Activated CD4-positive, alpha-beta T cell treated with anti-CD3 and anti-CD28 coated beads, Interleukin-2, amount 10 ng/mL, durations not matched to agents 24 days and 14 days (primary cell): ENCODE measurements at regions of chr6 and their contacts with region 1.

Region 1: DNA sequence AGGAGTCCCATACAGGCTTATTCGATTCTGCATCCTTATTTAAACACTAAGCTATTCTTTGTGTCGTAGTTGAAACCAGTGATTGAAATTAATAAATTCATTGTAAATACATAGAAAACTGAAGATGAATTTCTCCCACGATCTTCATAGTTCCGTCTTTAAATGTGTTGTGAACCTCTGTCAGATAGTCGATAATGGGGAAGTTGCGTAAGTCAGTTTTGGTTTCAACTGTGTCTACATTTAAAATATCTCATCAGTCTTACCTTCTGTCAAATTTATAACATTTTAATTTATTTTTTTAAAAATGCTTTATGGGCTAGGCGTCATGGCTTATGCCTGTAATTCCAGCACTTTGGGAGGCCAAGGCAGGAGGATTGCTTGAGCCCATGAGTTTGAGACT is 12.7 kb downstream of the STX11 start:
- DNase-seq: no peak
- H3K4me3 Mint-ChIP-seq: no peak overlapping the region
- H3K27ac Mint-ChIP-seq: no peak overlapping the region
- H3K4me1 Mint-ChIP-seq: peaks cover 9% of the 10 kb centered on the region
- H3K27me3 Mint-ChIP-seq: no peaks in the 10 kb centered on the region

Region 2: GRCh38 chr6:143679041-143679440 is 483.9 kb before region 1 on chr6:
- intact Hi-C with region 1: no loop called
- DNase-seq: no peak
- H3K4me3 Mint-ChIP-seq: peak overlapping the region; percentile 84
- H3K27ac Mint-ChIP-seq: no peak overlapping the region
- H3K4me1 Mint-ChIP-seq: peaks cover 15% of the 10 kb centered on the region
- H3K27me3 Mint-ChIP-seq: peaks cover 46% of the 10 kb centered on the region

Region 3: GRCh38 chr6:144181639-144182038 is 18.7 kb after region 1 on chr6:
- intact Hi-C with region 1: loop called (anchors 1 kb)
- DNase-seq: no peak
- H3K4me3 Mint-ChIP-seq: no peak overlapping the region
- H3K27ac Mint-ChIP-seq: no peak overlapping the region
- H3K4me1 Mint-ChIP-seq: peaks cover 43% of the 10 kb centered on the region
- H3K27me3 Mint-ChIP-seq: no peaks in the 10 kb centered on the region